ENCODE measurements at regions of chr11 and their contacts with region 1.

Region 1: DNA sequence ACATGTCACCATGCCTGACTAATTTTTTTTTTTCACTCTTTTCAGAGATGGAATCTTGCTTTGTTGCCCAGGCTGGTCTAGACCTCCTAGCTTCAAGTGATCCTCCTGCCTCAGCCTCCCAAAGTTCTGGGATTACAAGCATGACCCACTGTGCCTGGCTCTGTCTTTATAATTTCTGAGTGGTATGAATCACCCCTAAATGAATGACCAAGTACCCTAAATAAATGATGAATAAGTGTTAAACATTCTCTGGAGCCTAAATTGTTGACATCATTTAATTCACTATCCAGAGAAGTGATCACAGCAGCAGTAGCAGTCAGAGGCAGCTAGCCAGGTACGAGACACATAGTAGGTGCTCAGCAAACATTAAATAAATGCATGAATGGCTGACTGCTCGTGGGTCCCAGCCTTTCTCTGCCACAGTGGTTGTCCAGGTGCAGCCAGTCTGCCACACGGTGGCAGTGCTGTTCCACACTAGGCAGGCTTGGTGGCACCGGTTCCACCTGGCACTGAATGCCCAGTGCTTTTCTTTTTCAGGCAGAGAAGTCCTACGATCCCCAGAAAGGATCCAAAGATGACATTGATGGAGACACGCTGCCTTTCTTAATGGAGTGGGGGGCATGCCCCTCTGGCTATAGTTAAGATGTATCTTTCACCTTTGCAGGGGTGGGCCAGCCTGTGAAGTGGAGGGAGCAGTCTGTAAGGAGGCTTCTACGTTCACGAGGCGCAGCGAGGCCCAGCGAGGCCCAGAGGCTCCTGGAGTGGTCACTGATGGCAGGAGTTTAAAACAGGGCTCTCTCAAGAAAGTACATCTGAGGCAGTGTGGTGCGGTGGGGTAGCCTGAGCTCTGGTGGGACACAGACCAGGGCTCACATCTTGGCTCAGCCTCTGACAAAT is 8.7 kb upstream of the TTC12 start:
- DNase-seq: peak; percentile 81 to 88
- H3K4me3 ChIP-seq: no peak overlapping the region
- H3K4me3 Mint-ChIP-seq: no peak overlapping the region
- H3K27ac Mint-ChIP-seq: no peak overlapping the region
- H3K4me1 ChIP-seq: no peaks in the 10 kb centered on the region
- H3K4me1 Mint-ChIP-seq: no peaks in the 10 kb centered on the region
- H3K27me3 ChIP-seq: no peaks in the 10 kb centered on the region; the same call in 1 of the 2 replicates
- H3K27me3 Mint-ChIP-seq: no peaks in the 10 kb centered on the region
- CTCF ChIP-seq: peak; percentile 99

Region 2: GRCh38 chr11:113474362-113475159 is 168.9 kb after region 1 on chr11:
- CTCF ChIA-PET with region 1: no interaction called
- POLR2A ChIA-PET with region 1: no interaction called
- intact Hi-C with region 1: loop called (anchors 5 kb)
- DNase-seq: peak; percentile 95 to 99
- H3K4me3 ChIP-seq: peak overlapping the region; percentile 43
- H3K4me3 Mint-ChIP-seq: peak overlapping the region; percentile 59
- H3K27ac Mint-ChIP-seq: no peak overlapping the region
- H3K4me1 ChIP-seq: peaks cover 8% of the 10 kb centered on the region; the same call in 1 of the 2 replicates
- H3K4me1 Mint-ChIP-seq: peaks cover 9% of the 10 kb centered on the region
- H3K27me3 ChIP-seq: peaks cover 7% of the 10 kb centered on the region
- H3K27me3 Mint-ChIP-seq: peaks cover 17% of the 10 kb centered on the region
- CTCF ChIP-seq: no peak

Region 3: DNA sequence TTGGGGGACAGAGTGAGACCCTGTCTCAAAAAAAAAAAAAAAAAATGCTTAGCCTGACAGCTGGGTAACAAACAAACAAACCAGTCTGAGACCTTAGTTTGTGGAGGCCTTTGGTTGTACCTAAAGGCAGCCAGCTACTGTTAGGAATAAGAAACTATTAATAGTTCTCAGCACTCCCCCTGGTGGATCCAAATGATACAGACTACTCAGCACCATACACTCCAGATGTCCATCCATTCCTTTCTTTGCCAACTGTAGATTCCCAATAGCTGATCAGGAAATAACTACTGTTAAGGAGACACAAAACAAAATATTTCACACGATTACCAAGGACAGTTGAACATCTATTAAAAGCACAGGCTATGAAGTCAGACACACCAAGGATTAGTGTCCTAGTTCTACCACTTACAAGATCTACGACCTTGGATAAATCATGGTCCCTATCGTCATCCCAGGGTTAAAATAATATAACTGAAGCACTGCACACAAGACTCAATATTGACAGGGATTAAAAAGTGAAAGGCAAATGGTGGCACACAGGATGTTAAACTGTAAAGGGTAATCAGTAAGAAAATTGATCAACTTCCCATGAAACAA is 491.1 kb after region 1 on chr11:
- CTCF ChIA-PET with region 1: interaction called, 6 read pairs
- POLR2A ChIA-PET with region 1: no interaction called
- intact Hi-C with region 1: loop called (anchors 1 kb)
- DNase-seq: peak; percentile 48 to 70
- H3K4me3 ChIP-seq: no peak overlapping the region
- H3K4me3 Mint-ChIP-seq: no peak overlapping the region
- H3K27ac Mint-ChIP-seq: no peak overlapping the region
- H3K4me1 ChIP-seq: no peaks in the 10 kb centered on the region
- H3K4me1 Mint-ChIP-seq: no peaks in the 10 kb centered on the region
- H3K27me3 ChIP-seq: no peaks in the 10 kb centered on the region
- H3K27me3 Mint-ChIP-seq: no peaks in the 10 kb centered on the region
- CTCF ChIP-seq: peak; percentile 79 to 86

Measured in Caco-2 (cell line).